Breast epithelium (tissue), 4 donors: ENCODE measurements at regions of chr2 and their contacts with region 1.

Region 1: DNA sequence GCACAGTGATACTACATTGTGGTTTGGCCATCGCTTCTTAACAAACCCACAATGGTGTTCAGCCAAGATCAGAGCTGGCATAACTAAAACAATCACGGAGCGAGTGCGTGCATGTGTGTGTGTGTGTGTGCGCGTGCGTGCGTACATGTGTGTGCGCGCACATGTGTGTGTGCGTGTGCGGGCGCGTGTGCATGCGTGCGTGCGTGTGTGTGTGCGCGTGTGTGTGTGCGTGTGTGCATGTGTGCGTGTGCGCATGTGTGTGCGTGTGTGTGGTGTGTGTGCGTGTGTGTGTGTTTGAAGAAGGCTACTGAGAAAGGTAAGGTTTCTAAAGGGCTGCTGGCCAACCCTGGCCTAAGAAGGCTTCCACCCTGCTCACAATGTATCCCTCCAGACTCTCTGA is 582.4 kb downstream of the CMPK2 start:
- DNase-seq: no peak
- H3K4me3 ChIP-seq: no peak overlapping the region
- H3K27ac ChIP-seq: no peak overlapping the region
- H3K4me1 ChIP-seq: no peaks in the 10 kb centered on the region
- H3K27me3 ChIP-seq: no peaks in the 10 kb centered on the region
- CTCF ChIP-seq: no peak
- POLR2A ChIP-seq: no peak

Region 2: DNA sequence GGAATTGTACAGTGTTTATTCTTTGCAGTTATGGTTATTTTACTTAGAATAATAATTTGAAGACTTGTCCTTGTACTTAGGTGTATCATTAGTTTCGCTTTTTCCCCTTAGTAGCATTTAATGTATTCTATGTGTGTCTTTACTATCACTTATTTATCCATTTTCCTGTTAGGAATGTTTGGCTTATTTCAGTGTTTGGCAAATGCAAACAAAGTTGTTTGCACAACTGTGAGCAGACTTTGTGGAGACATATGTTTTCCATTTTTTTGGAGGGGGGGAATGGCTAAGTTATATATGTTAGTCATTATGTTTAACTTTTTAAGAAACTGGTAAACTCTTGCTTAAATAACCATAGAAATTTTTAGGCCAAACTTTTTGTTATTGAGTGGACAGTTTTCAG is 143.3 kb before region 1 on chr2:
- intact Hi-C with region 1: loop called (anchors 10 kb)
- DNase-seq: no peak
- H3K4me3 ChIP-seq: no peak overlapping the region
- H3K27ac ChIP-seq: no peak overlapping the region
- H3K4me1 ChIP-seq: no peaks in the 10 kb centered on the region
- H3K27me3 ChIP-seq: no peaks in the 10 kb centered on the region
- CTCF ChIP-seq: no peak
- POLR2A ChIP-seq: no peak

Region 3: DNA sequence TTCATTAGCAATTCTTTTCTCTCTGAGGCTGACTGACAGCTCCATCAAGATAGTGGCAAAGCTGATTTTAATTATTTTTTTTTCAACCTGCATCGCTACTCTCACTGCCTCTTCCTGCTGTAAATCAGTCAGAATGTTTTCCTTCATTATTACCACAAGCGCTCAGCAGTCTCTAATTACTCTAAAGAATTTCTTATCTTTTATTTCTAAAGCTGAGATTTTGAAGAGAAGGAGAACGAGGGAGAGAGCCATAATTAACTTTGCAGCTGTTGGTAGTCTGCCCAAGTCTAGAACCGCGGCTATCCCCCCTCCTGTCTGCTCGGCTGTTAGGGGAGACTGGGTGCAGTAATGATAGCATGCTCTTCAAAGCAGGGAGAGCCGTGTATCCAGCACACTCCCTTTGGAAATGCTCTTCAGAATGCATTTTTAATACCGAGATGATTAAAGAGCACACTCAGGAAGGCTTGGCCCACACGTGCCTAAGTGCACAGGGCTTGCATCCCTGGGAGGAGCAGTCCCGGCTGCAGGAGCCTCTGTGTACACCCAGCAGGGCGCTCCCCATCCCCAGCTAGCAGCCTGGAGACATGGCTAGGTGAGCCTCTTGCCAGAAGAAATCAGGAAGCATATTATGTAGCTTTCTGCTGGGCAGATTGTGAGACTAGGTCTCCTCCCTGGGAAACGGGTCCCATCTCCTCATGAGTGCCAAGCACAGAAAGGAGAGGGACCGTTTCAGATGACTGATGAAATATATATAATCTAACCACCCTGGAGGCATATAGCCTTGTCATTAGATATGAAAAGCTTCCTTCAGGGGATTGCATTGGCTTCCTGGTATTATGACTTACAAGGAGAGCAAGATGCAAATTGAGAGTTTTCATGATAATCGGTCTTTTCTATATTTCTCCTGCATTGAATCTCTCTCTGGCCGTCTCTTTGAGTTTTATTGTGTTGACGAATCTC is 27.3 kb after region 1 on chr2:
- intact Hi-C with region 1: no loop called
- DNase-seq: no peak
- H3K4me3 ChIP-seq: no peak overlapping the region
- H3K27ac ChIP-seq: no peak overlapping the region
- H3K4me1 ChIP-seq: no peaks in the 10 kb centered on the region
- H3K27me3 ChIP-seq: peaks cover 0 to 3% of the 10 kb centered on the region in 2 donors
- CTCF ChIP-seq: no peak
- POLR2A ChIP-seq: no peak

Region 4: DNA sequence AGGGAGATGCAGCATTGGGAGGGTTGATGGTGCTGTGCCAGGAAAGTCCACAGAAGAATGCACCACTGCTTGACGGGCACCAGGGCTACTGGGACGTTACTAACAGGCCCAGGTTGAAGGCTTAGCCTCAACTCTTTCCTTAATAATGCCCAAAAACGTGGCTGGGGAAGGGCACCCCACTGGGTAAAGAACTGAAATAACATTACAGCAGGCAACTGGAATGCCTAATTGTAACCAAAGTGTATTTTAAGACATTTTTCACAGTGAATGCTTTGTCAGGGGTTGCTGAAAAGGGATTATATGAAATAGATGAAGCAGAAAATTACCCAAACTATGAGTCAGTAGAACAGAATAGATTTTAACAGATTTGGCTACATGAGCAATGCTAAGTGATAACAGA is 391.1 kb after region 1 on chr2:
- intact Hi-C with region 1: loop called (anchors 10 kb)
- DNase-seq: no peak
- H3K4me3 ChIP-seq: no peak overlapping the region
- H3K27ac ChIP-seq: no peak overlapping the region
- H3K4me1 ChIP-seq: no peaks in the 10 kb centered on the region
- H3K27me3 ChIP-seq: no peaks in the 10 kb centered on the region
- CTCF ChIP-seq: no peak
- POLR2A ChIP-seq: no peak

Region 5: DNA sequence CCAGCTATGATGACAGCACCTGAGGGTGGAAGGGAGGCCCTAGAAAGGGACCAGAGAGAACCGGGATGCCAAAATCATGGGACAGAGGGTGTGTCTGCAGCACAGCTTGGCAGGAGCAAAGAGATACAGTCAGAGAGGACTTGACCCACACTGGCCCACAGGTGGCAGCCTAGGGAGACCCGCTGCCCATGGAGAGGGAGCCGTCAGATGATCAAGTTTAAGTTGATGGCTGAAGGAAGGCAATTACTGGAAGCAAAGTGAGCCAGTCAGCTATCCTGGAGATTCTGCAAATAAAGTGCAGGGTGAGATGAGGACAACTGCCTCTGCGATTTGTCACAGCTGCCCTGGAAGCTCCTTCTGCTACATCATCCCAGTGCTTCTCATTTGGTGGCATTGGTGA is 508.4 kb after region 1 on chr2:
- intact Hi-C with region 1: no loop called
- DNase-seq: no peak
- H3K4me3 ChIP-seq: no peak overlapping the region
- H3K27ac ChIP-seq: no peak overlapping the region
- H3K4me1 ChIP-seq: no peaks in the 10 kb centered on the region
- H3K27me3 ChIP-seq: peaks cover 0 to 4% of the 10 kb centered on the region in 2 donors
- CTCF ChIP-seq: no peak
- POLR2A ChIP-seq: no peak